Calu3 (cell line): ENCODE measurements at regions of chr22 and their contacts with region 1.

Region 1: DNA sequence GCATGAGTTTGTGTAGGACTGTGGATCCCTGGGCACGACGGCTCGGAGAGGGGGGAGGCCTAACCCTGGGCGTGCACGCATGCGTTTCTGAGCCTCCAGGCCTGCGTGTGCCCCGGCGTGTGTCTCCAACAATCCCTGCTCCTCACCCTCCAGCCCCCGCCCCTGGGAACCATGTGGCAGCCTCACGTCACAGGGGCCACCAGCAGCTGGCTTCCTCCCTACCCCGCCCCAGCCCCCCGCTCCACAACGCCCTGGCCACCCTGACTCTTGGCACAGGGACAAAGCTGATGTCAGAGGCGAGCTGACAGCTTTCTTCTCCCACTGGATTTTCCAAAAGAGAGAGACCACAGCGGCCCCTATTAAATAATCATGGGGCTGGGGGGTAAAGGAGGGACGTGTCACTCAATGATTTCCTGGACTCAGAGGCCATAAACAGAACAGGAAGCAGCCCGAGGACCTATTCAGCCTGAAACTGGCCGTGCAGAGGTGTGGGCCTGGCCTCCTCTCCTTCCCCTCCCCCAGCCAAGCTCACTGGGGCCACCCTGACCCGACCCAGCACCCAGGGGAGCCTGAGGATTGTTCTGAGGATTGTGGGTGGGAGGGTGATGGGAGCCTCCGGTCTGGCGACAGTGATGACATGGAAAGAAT is 6.8 kb upstream of the LIF start:
- DNase-seq: peak; percentile 95
- H3K4me3 Mint-ChIP-seq: peak overlapping the region; percentile 94
- H3K27ac Mint-ChIP-seq: peak overlapping the region; percentile 98
- H3K4me1 Mint-ChIP-seq: peaks cover 70% of the 10 kb centered on the region
- H3K27me3 Mint-ChIP-seq: no peaks in the 10 kb centered on the region
- CTCF ChIP-seq: no peak

Region 2: DNA sequence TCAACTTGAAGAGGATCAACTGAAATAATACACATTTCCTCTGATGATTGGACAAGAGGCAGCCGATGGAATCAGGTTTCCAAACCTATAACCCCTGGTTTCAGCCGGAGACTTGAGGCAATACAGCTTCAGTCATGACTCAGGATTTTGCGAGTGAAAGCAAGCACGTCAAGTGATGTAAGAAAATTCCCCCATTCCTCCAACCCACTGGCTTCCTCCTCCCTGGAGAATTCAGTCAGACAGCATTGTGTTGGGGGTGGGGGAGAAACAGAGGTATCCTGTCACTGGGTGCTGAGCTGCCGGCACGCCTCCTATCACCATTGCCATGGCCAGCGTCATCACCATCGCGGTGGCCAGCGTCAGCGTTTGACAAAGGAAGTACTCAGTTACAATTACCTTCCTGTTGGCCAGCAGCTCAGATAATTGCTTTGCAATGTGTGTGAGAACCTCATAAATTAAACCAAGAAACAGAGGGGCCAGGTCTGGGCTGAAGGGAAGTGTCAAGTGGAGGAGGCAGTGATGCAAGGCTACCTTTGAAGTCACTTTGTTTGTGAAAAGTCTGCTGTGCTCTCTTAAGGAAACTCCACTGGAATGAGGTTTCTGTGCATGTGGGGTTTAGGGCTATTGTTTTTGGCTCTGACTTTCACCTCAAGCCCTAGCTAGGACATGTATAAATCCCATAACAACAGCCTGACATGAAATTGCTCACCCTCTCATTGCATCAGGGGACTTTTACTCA is 57.0 kb before region 1 on chr22:
- CTCF ChIA-PET with region 1: interaction called, 8 read pairs
- intact Hi-C with region 1: loop called (anchors 1 kb)
- DNase-seq: peak; percentile 97
- H3K4me3 Mint-ChIP-seq: peak overlapping the region; percentile 28
- H3K27ac Mint-ChIP-seq: peak overlapping the region; percentile 98
- H3K4me1 Mint-ChIP-seq: peaks cover 53% of the 10 kb centered on the region
- H3K27me3 Mint-ChIP-seq: no peaks in the 10 kb centered on the region
- CTCF ChIP-seq: no peak